Posterior vena cava (tissue), 2 donors: ENCODE measurements at regions of chr5 and their contacts with region 1.

Region 1: GRCh38 chr5:149504677-149505076 is 46.6 kb downstream of the CSNK1A1 start:
- DNase-seq: no peak

Region 2: GRCh38 chr5:149215478-149216090 is 289.1 kb before region 1 on chr5:
- intact Hi-C with region 1: no loop called
- DNase-seq: peak; percentile 89

Region 3: GRCh38 chr5:149485655-149486425 is 18.8 kb before region 1 on chr5:
- intact Hi-C with region 1: no loop called
- DNase-seq: peak; percentile 89

Region 4: GRCh38 chr5:149551200-149552037 is 46.7 kb after region 1 on chr5 and contains the start of gene CSNK1A1:
- intact Hi-C with region 1: loop called in 1 of 2 experiments (anchors 5 kb)
- DNase-seq: peak; percentile 100
- total RNA-seq, gene CSNK1A1: 223 to 231 TPM

Region 5: GRCh38 chr5:150350524-150351344 is 846.1 kb after region 1 on chr5:
- intact Hi-C with region 1: loop called in 1 of 2 experiments (anchors 5 kb)
- DNase-seq: peak; percentile 87